ENCODE measurements at regions of chr16 and their contacts with region 1.

Region 1: GRCh38 chr16:20900299-20901067 is at the starts of genes DCUN1D3 and LYRM1:
- DNase-seq: peak; percentile 95
- ATAC-seq: peak; percentile 86
- H3K4me3 Mint-ChIP-seq: peak within 1 kb of the TSS; percentile 83
- H3K27ac Mint-ChIP-seq: peak within 1 kb of the TSS; percentile 94
- H3K4me1 Mint-ChIP-seq: peaks cover 60% of the 10 kb centered on the region
- H3K27me3 Mint-ChIP-seq: no peaks in the 10 kb centered on the region
- total RNA-seq, gene DCUN1D3: 4.2 to 5.1 TPM
- total RNA-seq, gene LYRM1: 24.7 to 29.5 TPM

Region 2: GRCh38 chr16:19521471-19522396 is 1378.7 kb before region 1 on chr16 and contains the start of gene GDE1:
- CTCF ChIA-PET with region 1: no interaction called
- POLR2A ChIA-PET with region 1: no interaction called
- intact Hi-C with region 1: loop called in 1 of 2 experiments (anchors 2 kb)
- DNase-seq: peak; percentile 97
- ATAC-seq: peak; percentile 83
- H3K4me3 Mint-ChIP-seq: peak within 1 kb of the TSS; percentile 94
- H3K27ac Mint-ChIP-seq: peak within 1 kb of the TSS; percentile 90
- H3K4me1 Mint-ChIP-seq: peaks cover 45% of the 10 kb centered on the region
- H3K27me3 Mint-ChIP-seq: no peaks in the 10 kb centered on the region
- total RNA-seq, gene GDE1: 13.8 to 18.1 TPM

Region 3: DNA sequence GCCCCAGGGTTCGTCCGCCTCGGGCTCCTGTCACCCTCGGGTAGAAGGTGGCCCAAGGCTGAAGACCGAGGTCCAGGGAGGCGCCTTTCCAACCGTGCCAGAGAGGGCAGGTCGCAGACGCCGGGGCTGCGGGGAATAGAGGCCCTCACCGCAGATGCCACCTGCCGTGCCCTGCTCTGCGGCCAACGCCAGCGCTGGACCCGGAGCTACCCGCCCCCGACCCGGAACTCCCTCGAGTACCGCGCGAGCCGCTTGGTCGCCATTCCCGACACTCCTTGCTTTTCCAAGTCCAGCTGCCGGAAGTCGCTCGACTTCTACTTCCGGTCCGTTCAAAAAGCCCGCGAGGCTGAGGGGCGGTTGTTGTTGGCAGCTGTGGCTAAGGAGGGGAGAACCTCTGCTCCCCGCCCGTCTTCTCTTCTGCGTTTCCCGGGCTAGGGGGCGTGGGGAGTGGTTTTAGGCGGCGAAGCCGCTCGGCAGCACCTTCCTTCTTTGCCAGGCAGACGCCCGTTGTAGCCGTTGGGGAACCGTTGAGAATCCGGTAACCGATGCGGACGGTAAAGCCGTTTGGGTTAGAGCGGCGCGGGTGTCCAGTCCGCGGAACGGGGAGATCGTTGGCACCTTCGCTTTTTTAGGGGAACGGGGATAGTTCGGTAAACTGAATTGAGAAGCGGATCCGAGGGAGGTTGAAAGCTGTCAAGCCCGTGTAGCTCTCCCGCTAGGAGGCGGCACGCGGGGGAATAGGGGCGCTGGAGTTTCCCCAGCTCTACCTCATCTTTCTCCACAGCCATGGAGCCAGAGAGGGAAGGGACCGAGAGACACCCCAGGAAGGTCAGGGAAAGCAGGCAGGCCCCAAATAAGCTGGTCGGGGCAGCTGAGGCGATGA is 94.1 kb before region 1 on chr16 and contains the starts of genes ERI2 and REXO5:
- CTCF ChIA-PET with region 1: no interaction called
- POLR2A ChIA-PET with region 1: no interaction called
- intact Hi-C with region 1: loop called in 1 of 2 experiments (anchors 1 kb)
- DNase-seq: peak; percentile 86
- ATAC-seq: peak; percentile 87
- H3K4me3 Mint-ChIP-seq: peak within 1 kb of the TSS; percentile 79
- H3K27ac Mint-ChIP-seq: peak within 1 kb of the TSS; percentile 97
- H3K4me1 Mint-ChIP-seq: peaks cover 18% of the 10 kb centered on the region
- H3K27me3 Mint-ChIP-seq: no peaks in the 10 kb centered on the region
- total RNA-seq, gene ERI2: 17.6 to 19.8 TPM
- total RNA-seq, gene REXO5: 17.9 to 20.4 TPM

Region 4: DNA sequence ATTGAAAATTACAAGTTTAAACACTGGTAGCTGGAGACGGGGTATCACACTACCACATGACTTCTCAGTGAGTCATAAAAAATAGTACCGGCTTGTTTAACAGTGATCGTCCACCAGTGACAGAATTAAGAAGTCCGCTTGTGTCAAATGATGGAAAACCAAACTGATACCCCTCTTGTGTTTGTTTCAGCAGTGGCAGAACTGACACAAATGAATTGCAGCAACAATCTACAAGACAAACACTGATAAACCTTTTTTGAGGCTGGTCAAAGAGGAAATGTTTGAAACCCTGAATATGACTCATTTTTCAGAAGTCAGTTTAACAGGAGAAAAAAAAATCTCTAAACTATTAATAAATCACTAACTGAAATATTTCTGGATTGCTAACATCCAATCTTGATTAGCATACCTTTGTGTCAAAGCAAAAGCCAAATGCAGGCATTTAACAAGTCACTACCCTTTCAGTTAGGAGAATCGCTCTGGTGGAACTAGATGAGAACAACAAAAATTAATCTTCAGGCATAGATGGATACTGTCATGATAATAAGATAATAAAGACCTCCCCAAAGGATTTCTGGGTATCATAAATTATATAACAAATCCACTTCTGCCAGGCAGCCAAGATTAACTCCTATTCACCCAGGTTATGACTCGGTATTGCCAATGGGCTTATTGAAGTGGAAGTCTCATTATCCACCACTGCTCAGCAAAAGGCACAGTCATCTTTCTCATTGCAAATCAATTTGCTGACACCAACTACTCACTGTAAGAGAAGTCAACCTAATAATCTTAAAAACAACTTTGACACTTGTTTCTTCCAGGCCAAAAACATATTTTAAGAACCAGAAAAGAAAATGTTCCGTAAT is 21.1 kb before region 1 on chr16:
- CTCF ChIA-PET with region 1: interaction called, 6 read pairs
- POLR2A ChIA-PET with region 1: interaction called, 5 read pairs
- intact Hi-C with region 1: loop called (anchors 1 kb)
- DNase-seq: no peak
- ATAC-seq: peak; percentile 42
- H3K4me3 Mint-ChIP-seq: no peak overlapping the region
- H3K27ac Mint-ChIP-seq: peak overlapping the region; percentile 5
- H3K4me1 Mint-ChIP-seq: peaks cover 44% of the 10 kb centered on the region
- H3K27me3 Mint-ChIP-seq: no peaks in the 10 kb centered on the region

Region 5: DNA sequence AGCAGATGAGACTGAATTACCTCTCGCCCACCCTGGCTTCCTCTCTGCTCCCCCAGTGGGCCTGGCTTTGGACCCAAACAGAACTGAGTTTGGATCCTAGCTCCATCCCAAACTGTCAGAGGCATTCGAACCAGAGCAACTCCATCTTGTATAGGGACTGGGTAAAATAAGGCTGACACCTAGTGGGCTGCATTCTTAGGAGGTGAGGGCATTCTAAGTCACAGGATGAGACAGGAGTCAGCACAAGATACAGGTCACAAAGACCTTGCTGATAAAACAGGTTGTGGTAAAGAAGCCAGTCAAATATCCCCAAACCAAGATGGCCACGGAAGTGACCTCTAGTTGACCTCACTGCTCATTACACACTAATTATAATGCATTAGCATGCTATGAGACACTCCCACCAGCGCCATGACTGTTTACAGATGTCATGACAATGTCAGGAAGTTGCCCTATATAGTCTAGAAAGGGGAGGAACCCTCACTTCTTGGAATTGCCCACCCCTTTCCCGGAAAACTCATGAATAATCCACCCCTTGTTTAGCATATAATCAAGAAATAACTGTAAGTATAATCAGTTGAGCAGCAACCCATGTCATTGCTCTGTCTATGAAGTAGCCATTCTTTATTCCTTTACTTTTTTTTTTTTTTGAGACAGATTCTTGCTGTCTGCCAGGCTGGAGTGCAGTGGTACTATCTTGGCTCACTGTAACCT is 44.5 kb after region 1 on chr16:
- CTCF ChIA-PET with region 1: no interaction called
- POLR2A ChIA-PET with region 1: no interaction called
- intact Hi-C with region 1: loop called in 1 of 2 experiments (anchors 2 kb)
- DNase-seq: peak; percentile 78
- ATAC-seq: peak; percentile 78
- H3K4me3 Mint-ChIP-seq: no peak overlapping the region
- H3K27ac Mint-ChIP-seq: peak overlapping the region; percentile 55
- H3K4me1 Mint-ChIP-seq: peaks cover 33% of the 10 kb centered on the region
- H3K27me3 Mint-ChIP-seq: no peaks in the 10 kb centered on the region

Region 6: DNA sequence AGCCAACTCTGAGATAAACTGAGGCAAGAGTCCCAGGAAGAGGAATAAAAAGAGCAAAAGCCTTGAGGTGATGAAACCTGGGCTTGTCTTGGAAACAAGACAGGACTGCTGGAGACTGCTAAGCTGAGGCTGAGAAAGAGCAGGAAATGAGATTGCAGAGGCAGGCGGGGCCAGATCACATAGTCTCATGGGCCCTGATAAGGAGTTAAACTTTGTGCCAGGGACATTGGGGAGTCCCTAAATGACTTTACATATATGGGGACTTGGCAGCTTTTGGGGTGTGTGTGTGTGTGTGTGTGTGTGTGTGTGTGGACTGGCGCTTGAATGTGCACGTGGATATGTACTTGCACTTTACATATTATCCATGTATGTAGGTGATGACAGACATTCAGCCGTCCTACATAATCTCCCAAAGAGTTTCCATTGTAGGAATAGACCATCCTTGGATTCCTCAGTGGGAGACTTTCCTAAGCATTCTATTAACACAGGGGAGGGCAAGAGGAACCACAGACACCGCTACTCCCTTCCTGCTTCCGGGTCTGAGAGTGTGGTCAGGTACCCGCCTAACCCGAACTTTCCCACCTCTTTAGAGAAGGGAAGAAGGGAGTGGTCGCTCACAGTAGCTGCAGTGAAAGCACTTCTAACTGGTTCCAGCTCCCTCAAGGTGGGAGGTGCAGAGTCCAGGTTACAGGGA is 123.2 kb after region 1 on chr16:
- CTCF ChIA-PET with region 1: no interaction called
- POLR2A ChIA-PET with region 1: no interaction called
- intact Hi-C with region 1: no loop called
- DNase-seq: peak; percentile 8
- ATAC-seq: peak; percentile 16
- H3K4me3 Mint-ChIP-seq: no peak overlapping the region
- H3K27ac Mint-ChIP-seq: no peak overlapping the region
- H3K4me1 Mint-ChIP-seq: peaks cover 6% of the 10 kb centered on the region
- H3K27me3 Mint-ChIP-seq: no peaks in the 10 kb centered on the region

Region 7: DNA sequence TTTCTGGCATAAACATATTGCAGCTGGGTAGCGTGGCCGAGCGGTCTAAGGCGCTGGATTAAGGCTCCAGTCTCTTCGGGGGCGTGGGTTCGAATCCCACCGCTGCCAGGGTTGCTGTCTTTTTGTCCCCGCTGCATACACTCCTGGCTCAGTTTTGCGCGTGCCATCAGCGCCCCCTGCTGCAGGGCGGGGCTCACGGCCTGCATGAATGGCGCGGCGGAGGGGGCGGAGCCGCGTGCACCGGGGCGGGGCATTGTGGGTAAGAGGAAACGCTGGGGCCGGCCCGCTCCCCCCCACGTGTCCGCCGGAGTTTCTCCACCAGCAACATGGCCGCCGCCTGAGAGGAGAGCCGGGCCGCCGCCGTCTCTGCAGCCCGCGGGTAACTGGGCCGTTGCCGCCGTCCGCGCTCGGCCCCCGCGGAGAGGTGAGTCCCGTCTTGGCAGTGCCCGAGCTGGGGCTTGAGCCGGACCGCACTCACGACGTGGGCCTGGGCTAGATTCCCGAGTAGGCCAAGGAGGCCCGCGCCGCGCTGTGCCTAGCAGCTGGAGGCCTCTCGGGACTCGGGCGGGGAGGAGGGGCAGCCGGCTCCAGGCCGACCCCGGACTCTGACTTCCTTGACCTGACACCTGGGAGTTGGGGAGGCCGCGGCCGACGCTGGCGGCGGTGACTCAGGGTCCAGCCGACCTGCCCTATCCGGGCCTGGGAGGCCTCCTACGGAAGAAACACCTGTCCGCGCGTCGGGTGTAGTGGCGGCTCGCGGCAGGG is 1396.8 kb after region 1 on chr16 and contains the start of gene POLR3E:
- CTCF ChIA-PET with region 1: no interaction called
- POLR2A ChIA-PET with region 1: no interaction called
- intact Hi-C with region 1: loop called in 1 of 2 experiments (anchors 1 kb)
- DNase-seq: peak; percentile 100
- ATAC-seq: peak; percentile 87
- H3K4me3 Mint-ChIP-seq: peak within 1 kb of the TSS; percentile 93
- H3K27ac Mint-ChIP-seq: peak within 1 kb of the TSS; percentile 96
- H3K4me1 Mint-ChIP-seq: peaks cover 38% of the 10 kb centered on the region
- H3K27me3 Mint-ChIP-seq: no peaks in the 10 kb centered on the region
- total RNA-seq, gene POLR3E: 70.9 to 87.4 TPM